ENCODE measurements at regions of chr12 and their contacts with region 1.

Region 1: GRCh38 chr12:116559162-116559935 is at the start of gene MAP1LC3B2:
- DNase-seq: peak; percentile 85
- H3K4me3 Mint-ChIP-seq: peak within 1 kb of the TSS; percentile 65
- H3K27ac Mint-ChIP-seq: peak within 1 kb of the TSS; percentile 94
- H3K4me1 Mint-ChIP-seq: peaks cover 38% of the 10 kb centered on the region
- H3K27me3 Mint-ChIP-seq: peaks cover 6% of the 10 kb centered on the region
- total RNA-seq, gene MAP1LC3B2: 0.49 and 0.57 TPM in 2 replicates

Region 2: DNA sequence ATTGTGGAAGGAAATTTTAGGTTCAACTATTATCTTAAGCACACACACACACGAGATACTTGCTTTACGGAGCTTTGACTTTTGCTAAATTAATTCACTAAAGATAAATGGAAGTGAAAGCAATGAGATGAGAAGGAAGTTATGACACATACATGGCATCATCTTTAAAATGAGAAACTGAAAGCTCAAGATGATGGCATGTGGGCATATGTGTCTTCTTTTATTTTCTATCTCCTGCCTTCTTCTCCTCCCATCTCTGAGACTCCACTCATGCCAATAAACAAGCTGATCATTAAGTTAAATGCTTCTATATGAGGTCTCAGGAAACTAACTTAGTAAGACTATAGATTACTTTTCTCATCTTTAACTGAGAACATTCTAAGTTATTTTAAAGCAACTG is 498.6 kb before region 1 on chr12:
- intact Hi-C with region 1: loop called (anchors 1 kb)
- DNase-seq: peak; percentile 2
- H3K4me3 Mint-ChIP-seq: peak overlapping the region; percentile 61
- H3K27ac Mint-ChIP-seq: peak overlapping the region; percentile 76
- H3K4me1 Mint-ChIP-seq: peaks cover 32% of the 10 kb centered on the region
- H3K27me3 Mint-ChIP-seq: no peaks in the 10 kb centered on the region

Region 3: DNA sequence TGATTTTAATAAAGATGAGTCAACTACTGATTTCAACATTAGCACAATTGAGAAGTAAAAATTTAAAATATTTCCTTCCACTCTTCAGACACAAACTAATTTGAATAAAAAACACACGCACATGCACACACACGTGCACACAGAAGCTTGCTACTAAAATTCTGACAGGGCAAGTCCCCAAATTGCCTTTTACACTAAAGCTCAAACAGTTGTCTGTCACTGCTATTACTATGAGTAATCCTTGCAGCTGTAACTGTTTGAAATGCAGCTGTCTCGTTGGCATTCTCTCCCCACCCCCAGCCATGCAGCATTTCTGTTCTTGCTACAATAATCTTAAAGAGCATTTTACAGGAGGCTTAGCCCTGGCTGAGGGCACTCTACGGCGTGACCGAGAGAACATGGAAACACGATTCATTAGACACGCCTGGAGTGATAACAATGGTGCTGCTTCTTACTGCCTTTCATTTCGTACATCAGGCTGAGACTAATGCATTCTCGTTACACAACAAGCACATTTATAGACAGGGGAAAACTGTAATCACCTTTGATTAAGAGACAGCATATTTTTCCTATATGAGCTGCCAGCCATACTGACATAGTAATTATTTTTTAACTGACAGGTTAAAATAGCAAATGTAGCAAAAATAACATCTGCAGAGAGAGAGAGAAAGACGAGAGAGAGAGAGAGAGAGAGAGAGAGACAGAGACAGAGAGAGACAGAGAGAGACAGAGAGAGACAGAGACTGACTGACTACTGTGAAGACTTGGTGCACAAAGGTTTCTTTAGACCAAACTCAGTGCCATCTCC is 435.7 kb before region 1 on chr12:
- intact Hi-C with region 1: no loop called
- DNase-seq: peak; percentile 12
- H3K4me3 Mint-ChIP-seq: peak overlapping the region; percentile 25
- H3K27ac Mint-ChIP-seq: peak overlapping the region; percentile 6
- H3K4me1 Mint-ChIP-seq: peaks cover 53% of the 10 kb centered on the region
- H3K27me3 Mint-ChIP-seq: no peaks in the 10 kb centered on the region

Region 4: DNA sequence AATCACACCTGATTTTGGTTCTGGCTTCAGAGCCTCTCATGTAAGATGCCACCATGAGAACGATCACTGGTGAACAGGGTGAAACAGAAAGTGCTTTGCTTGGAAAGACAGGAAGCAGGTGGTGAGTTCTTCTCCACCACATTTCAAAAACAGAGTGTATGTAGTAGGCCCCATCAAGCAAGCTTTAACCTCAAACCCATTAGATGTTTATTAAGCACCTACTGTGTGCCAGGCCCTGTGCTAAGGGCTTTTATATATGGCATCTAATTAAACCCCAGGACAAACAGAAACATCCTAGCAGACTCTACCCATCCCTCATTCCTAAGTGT is 234.0 kb before region 1 on chr12:
- intact Hi-C with region 1: loop called (anchors 1 kb)
- DNase-seq: peak; percentile 31
- H3K4me3 Mint-ChIP-seq: no peak overlapping the region
- H3K27ac Mint-ChIP-seq: peak overlapping the region; percentile 75
- H3K4me1 Mint-ChIP-seq: peaks cover 30% of the 10 kb centered on the region
- H3K27me3 Mint-ChIP-seq: peaks cover 8% of the 10 kb centered on the region

Region 5: DNA sequence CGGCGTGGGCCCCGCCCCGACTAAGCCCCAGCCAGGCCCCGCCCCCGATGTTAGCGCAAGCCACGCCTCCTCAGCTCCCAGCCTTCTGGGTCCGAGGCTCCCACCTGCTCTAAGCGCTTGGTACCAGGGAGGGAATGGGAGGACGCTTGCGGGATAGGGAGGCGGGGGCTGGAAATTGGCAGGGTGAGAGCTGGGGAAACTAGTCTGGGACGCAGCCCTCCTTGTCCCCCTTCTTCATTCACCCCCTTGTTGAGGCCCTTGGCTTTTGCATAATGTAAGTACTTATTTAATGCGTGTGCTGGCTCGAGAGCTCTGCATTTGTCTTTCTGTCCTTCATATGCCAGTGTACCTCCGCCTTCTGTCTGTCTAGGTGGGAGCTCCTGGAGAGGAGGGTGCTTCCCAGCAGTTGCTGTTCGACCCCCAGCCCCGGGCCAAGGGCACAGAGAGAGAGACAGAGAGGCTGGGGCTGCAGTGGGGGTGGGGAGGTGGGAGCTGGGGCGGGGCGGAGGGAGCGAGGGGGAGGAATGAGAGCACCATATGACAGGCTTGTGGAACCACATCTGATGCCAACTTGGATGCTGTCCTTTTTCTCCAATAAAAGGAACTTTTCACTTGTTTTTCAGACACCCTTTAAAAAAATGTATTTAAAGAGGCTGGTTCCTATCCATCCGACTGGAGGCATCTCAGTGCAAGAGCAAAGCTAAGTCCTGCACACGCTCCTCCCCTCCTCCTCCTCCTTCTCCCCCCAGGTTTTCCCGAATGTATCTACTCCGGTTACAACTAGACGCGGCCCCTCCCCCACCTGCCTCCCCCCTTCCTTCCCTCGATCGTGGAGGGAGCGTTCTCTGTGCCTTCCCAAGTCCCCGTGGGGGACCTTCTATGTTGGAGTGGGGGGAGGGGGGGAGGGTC is 25.8 kb before region 1 on chr12:
- intact Hi-C with region 1: loop called (anchors 1 kb)
- DNase-seq: peak; percentile 60
- H3K4me3 Mint-ChIP-seq: peak overlapping the region; percentile 89
- H3K27ac Mint-ChIP-seq: peak overlapping the region; percentile 75
- H3K4me1 Mint-ChIP-seq: peaks cover 41% of the 10 kb centered on the region
- H3K27me3 Mint-ChIP-seq: peaks cover 10% of the 10 kb centered on the region

Region 6: DNA sequence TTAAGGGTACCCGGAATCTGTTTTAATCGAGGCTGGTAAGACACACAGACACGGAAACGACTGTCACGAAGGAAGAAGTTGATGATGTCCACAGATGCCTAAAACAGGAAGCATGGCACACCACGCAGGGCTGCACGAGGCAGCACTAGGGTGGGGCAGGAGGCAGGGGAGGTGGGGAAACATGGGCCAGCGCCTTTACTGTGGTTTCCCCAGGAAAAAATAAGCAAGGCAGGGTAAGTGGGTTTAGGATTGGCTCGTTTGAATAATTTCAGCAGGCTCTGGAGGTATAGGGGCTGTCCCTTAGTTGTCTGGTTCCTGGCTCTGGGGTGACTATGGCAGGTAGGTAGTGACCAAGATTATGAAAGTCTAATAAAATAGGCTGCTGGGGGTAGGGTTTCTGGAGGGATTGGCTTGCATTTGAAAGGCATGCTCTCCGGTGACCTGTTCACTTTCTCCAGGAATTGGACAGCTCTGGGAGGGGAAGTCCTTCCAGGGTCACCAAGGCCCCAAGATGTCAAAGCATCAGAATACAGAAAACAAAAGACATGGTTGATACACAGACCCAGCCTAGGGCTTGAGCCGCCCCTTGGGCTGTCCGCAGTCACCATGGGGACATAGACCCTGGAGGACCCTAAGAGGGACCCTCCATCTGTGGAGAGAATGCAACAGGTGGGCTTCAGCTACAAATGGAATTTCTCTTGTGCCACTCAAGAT is 35.1 kb after region 1 on chr12:
- intact Hi-C with region 1: loop called (anchors 2 kb)
- DNase-seq: peak; percentile 44
- H3K4me3 Mint-ChIP-seq: peak overlapping the region; percentile 17
- H3K27ac Mint-ChIP-seq: peak overlapping the region; percentile 73
- H3K4me1 Mint-ChIP-seq: peaks cover 35% of the 10 kb centered on the region
- H3K27me3 Mint-ChIP-seq: peaks cover 4% of the 10 kb centered on the region

Region 7: DNA sequence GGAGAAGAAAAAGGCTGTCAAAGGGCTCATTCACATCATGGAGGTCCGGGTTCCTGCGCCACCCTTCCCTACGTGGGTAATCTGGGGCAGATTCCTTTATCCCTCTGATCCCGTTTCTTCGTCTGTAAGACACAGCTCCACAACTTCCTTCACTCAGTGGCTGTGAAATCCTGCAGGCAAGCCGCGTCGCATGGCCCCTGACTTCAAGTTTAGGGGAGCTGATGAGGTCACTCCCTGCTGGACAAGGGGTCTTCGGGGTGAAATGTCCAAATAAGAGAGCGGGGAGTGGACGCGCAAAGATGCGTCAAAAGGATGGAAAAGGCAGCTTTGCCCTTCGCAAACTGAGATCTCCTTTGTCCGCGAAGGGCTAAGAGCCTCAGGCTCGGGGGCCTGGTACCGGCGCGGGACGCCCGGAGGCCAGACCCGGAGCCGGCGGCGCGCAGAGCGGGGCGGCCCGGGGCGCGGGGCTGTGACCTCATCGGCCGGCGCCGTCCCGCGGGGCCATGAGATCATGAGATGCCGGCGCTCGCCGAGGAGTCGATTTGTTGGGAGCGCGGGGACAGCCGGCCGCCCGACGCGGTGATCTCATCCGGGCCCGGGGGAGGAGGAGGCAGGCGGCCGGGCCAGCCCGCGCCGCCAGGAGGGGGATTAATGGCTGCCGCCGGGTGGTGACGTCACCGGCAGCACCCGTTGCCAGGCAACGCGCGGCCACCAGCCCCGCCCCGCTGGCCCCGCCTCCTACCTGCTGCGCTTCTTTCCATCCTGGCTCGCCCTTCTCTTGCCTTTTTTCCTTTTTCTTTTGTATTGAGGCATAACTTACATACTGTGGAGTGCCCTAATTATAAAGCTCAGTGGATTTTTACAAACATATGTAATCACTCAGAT is 259.8 kb after region 1 on chr12:
- intact Hi-C with region 1: loop called (anchors 10 kb)
- DNase-seq: peak; percentile 85
- H3K4me3 Mint-ChIP-seq: peak overlapping the region; percentile 94
- H3K27ac Mint-ChIP-seq: peak overlapping the region; percentile 98
- H3K4me1 Mint-ChIP-seq: peaks cover 21% of the 10 kb centered on the region
- H3K27me3 Mint-ChIP-seq: peaks cover 9% of the 10 kb centered on the region

Measured in activated T-helper 1 cell treated with anti-CD3 and anti-CD28 coated beads, Interleukin-12 subunit alpha, Interleukin-12 subunit beta, Interleukin-2, Interleukin-4 antibody, amounts not matched to agents 30 ng/mL and 10 ng/mL and 1 ng/mL, durations not matched to agents 14 hours and 24 hours and 36 hours (primary cell).